Common myeloid progenitor, CD34-positive (primary cell): ENCODE measurements at regions of chr22 and their contacts with region 1.

Region 1: GRCh38 chr22:27804470-27805297 is 3.1 kb upstream of the MN1 start:
- DNase-seq: peak; percentile 79 to 84 (median 83)
- H3K4me3 ChIP-seq: peak overlapping the region in 3 of 7 experiments; percentile 51 to 60 (median 53)
- H3K27ac ChIP-seq: no peak overlapping the region
- H3K4me1 ChIP-seq: peaks cover 3 to 52% (median 38%) of the 10 kb centered on the region in 4 experiments
- H3K27me3 ChIP-seq: no peaks in the 10 kb centered on the region

Region 2: GRCh38 chr22:27405672-27406388 is 398.9 kb before region 1 on chr22:
- CTCF ChIA-PET with region 1: interaction called, 20 read pairs
- POLR2A ChIA-PET with region 1: no interaction called
- DNase-seq: peak; percentile 45 to 63 (median 61)
- H3K4me3 ChIP-seq: no peak overlapping the region
- H3K27ac ChIP-seq: no peak overlapping the region
- H3K4me1 ChIP-seq: peaks cover 0 to 5% (median 1%) of the 10 kb centered on the region in 4 experiments
- H3K27me3 ChIP-seq: no peaks in the 10 kb centered on the region

Region 3: DNA sequence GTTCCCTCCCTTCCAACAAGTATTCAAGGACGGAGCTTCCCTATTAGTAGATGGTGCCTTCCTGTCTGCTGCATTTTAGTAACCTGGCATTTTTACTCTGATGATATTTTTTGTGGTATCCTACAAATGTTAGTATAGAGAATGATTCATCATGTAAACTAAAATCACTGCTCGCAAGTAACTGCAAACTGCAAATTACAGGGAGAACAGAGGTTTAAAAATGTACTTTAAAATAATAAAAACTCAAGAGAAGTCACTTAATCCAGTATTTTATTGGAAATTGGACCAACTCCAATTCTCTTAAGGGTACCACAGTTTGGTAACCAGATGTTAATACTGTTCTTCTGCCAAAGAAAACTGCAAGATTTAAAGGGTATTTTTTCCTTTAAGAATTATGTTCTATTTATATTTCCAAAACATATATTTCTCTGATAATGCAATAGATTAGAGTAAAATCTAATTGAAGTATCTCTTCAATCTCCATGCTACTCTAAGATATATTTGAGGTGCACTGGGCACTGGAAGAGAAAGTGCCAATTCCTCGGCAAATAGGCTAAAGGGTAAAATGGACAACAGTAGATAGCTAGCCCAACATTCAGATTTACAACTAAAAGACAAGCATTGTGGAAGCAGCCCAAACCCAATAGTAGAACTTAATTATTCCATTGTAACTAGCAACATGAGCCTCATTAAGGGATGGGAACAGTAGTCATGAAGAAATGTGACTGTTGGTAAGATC is 576.9 kb after region 1 on chr22:
- CTCF ChIA-PET with region 1: no interaction called
- POLR2A ChIA-PET with region 1: no interaction called
- DNase-seq: no peak
- H3K4me3 ChIP-seq: no peak overlapping the region
- H3K27ac ChIP-seq: no peak overlapping the region
- H3K4me1 ChIP-seq: peaks cover 0 to 3% (median 1%) of the 10 kb centered on the region in 4 experiments
- H3K27me3 ChIP-seq: no peaks in the 10 kb centered on the region